GM12878 (cell line): ENCODE measurements at regions of chr7 and their contacts with region 1.

Region 1: GRCh38 chr7:87312215-87312865 is 33.1 kb upstream of the CROT start:
- DNase-seq: peak; percentile 15
- ATAC-seq: peak; percentile 81
- H3K4me3 ChIP-seq: no peak overlapping the region
- H3K27ac ChIP-seq: no peak overlapping the region
- H3K4me1 ChIP-seq: peaks cover 8% of the 10 kb centered on the region
- H3K27me3 ChIP-seq: no peaks in the 10 kb centered on the region
- CTCF ChIP-seq: peak; percentile 97 to 98 (median 98); a peak in 5 of 6 replicates
- EP300 ChIP-seq: no peak
- POLR2A ChIP-seq: no peak
- RAD21 ChIP-seq: peak; percentile 100

Region 2: GRCh38 chr7:87234949-87235348 is 77.4 kb before region 1 on chr7:
- CTCF ChIA-PET with region 1: no interaction called
- POLR2A ChIA-PET with region 1: no interaction called
- RAD21 ChIA-PET with region 1: no interaction called
- SMC1A ChIA-PET with region 1: no interaction called
- in situ Hi-C with region 1: no loop called
- intact Hi-C with region 1: no loop called
- DNase-seq: no peak
- ATAC-seq: no peak
- H3K4me3 ChIP-seq: no peak overlapping the region
- H3K27ac ChIP-seq: no peak overlapping the region
- H3K4me1 ChIP-seq: no peaks in the 10 kb centered on the region
- H3K27me3 ChIP-seq: no peaks in the 10 kb centered on the region
- CTCF ChIP-seq: no peak
- EP300 ChIP-seq: no peak
- POLR2A ChIP-seq: no peak
- RAD21 ChIP-seq: no peak

Region 3: DNA sequence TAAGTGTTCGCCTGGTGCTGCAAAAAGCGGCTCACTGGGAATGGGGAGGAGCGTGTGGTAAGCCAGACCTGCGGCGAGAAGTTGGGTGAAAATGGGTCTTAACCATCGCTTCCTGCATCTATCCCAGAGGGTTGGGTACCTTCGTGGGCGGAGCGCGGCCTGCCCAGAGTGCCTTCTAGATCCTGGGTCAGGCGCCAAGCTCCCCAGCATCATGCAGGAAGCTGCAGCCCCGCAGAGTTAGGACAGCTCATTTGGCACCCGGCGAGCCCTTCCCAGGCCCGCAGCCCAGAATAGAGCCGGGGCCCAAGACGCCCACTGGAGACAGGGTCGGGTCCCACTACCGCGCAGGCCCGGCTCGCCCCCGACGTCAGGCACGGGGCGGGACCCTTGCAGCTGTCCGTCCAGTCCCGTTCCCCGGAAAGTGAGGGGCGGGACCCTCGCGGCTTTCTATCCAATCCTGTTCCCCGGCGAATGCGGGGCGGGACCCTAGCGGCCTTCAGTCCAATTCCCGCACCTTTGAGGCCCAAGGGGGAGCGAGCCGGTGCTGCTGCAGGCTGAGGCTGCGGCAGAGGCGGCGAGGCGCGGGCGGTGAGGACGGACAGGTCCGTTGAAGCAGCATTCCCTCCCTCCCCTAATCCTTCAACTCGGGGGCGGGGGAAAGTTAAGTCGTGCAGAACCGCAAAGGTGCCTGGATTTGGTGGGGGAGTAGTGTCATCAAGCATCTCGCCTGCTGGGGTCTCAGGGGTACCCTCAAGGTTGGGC is 33.0 kb after region 1 on chr7 and contains the start of gene CROT:
- CTCF ChIA-PET with region 1: interaction called, 9 read pairs
- POLR2A ChIA-PET with region 1: interaction called, 11 read pairs
- RAD21 ChIA-PET with region 1: interaction called, 13 read pairs
- SMC1A ChIA-PET with region 1: interaction called, 37 read pairs
- in situ Hi-C with region 1: no loop called
- intact Hi-C with region 1: loop called (anchors 1 kb)
- DNase-seq: peak; percentile 67
- ATAC-seq: peak; percentile 97
- H3K4me3 ChIP-seq: peak within 1 kb of the TSS; percentile 80
- H3K27ac ChIP-seq: peak within 1 kb of the TSS; percentile 76
- H3K4me1 ChIP-seq: no peaks in the 10 kb centered on the region
- H3K27me3 ChIP-seq: no peaks in the 10 kb centered on the region
- CTCF ChIP-seq: no peak
- EP300 ChIP-seq: no peak
- POLR2A ChIP-seq: peak; percentile 91
- RAD21 ChIP-seq: no peak
- polyA plus RNA-seq, gene CROT: 5.5 to 6.0 TPM

Region 4: GRCh38 chr7:87411186-87411585 is 98.8 kb after region 1 on chr7:
- CTCF ChIA-PET with region 1: interaction called, 296 read pairs
- POLR2A ChIA-PET with region 1: interaction called, 8 read pairs
- RAD21 ChIA-PET with region 1: interaction called, 109 read pairs
- SMC1A ChIA-PET with region 1: interaction called, 260 read pairs
- in situ Hi-C with region 1: no loop called
- intact Hi-C with region 1: loop called (anchors 1 kb)
- DNase-seq: no peak
- ATAC-seq: no peak
- H3K4me3 ChIP-seq: no peak overlapping the region
- H3K27ac ChIP-seq: no peak overlapping the region
- H3K4me1 ChIP-seq: no peaks in the 10 kb centered on the region
- H3K27me3 ChIP-seq: no peaks in the 10 kb centered on the region
- CTCF ChIP-seq: no peak
- EP300 ChIP-seq: no peak
- POLR2A ChIP-seq: no peak
- RAD21 ChIP-seq: no peak

Region 5: GRCh38 chr7:87564289-87564963 is 252.1 kb after region 1 on chr7:
- CTCF ChIA-PET with region 1: interaction called, 3 read pairs
- POLR2A ChIA-PET with region 1: no interaction called
- RAD21 ChIA-PET with region 1: no interaction called
- SMC1A ChIA-PET with region 1: no interaction called
- in situ Hi-C with region 1: no loop called
- intact Hi-C with region 1: loop called (anchors 2 kb)
- DNase-seq: no peak
- ATAC-seq: peak; percentile 98
- H3K4me3 ChIP-seq: no peak overlapping the region
- H3K27ac ChIP-seq: no peak overlapping the region
- H3K4me1 ChIP-seq: no peaks in the 10 kb centered on the region
- H3K27me3 ChIP-seq: no peaks in the 10 kb centered on the region
- CTCF ChIP-seq: peak; percentile 52 to 74 (median 54)
- EP300 ChIP-seq: no peak
- POLR2A ChIP-seq: no peak
- RAD21 ChIP-seq: peak; percentile 55

Region 6: DNA sequence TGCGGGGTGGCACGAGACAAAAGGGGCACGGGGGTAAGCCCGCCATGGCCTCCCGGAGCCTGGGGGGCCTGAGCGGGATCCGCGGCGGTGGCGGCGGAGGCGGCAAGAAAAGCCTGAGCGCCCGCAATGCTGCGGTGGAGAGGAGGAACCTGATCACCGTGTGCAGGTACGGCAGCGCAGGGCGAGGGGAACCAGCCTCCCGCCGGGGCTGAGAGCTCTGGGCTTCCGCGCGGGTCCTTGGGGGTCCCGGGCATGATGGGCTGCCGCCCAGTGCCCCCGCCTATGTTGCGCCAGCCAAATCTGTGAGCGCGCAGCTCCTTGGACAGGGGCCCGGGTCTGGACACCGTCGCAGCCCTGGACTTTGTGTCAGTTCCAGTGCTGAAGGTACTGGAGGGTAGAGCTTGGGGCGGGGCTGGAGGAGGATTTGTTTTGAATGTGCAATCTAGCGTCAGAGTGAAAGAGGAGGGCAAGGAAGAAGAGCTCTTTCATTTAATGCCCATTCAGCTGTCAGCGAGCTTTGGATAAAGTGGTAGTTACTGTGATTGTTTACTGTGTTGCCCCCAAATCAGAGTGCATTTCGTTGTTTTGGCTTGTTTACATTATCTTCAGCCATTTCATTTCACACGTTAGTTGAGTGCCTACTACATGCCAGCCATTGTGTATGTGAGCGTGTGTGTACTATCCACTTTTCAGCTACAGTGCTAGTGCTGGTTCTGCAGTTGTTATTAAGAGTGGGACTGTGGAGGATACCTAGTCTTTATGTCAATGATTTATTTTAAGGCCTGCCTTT is 316.6 kb after region 1 on chr7:
- CTCF ChIA-PET with region 1: no interaction called
- POLR2A ChIA-PET with region 1: no interaction called
- RAD21 ChIA-PET with region 1: no interaction called
- SMC1A ChIA-PET with region 1: interaction called, 4 read pairs
- in situ Hi-C with region 1: no loop called
- intact Hi-C with region 1: loop called (anchors 10 kb)
- DNase-seq: no peak
- ATAC-seq: peak; percentile 43
- H3K4me3 ChIP-seq: peak overlapping the region; percentile 69
- H3K27ac ChIP-seq: no peak overlapping the region
- H3K4me1 ChIP-seq: peaks cover 10% of the 10 kb centered on the region; the same call in 1 of the 2 replicates
- H3K27me3 ChIP-seq: no peaks in the 10 kb centered on the region
- CTCF ChIP-seq: no peak
- EP300 ChIP-seq: no peak
- POLR2A ChIP-seq: no peak
- RAD21 ChIP-seq: no peak